GM12878 (cell line): ENCODE measurements at regions of chr15 and their contacts with region 1.

Region 1: DNA sequence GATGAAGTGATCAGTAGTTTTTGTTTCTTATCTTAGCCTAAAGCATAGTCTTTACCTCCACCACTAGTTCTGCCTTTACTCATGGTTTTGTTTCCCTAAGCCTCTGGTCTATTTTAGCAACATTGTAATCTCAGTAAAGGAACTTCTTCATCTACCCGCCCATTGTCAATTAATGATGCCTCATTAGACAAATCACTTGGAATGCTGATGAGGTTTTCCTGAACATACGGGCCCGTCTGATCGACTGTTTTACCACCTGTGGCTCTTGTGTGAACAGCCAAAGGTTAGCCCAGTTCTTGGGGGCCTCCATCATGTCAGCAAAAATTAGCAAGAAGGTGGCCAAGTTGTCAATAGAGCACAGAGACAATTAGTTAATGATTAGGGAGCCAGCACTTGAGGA is 470.1 kb upstream of the ARRDC4 start:
- DNase-seq: no peak
- ATAC-seq: no peak
- H3K4me3 ChIP-seq: no peak overlapping the region
- H3K27ac ChIP-seq: no peak overlapping the region
- H3K4me1 ChIP-seq: no peaks in the 10 kb centered on the region
- H3K27me3 ChIP-seq: no peaks in the 10 kb centered on the region
- CTCF ChIP-seq: no peak
- EP300 ChIP-seq: no peak
- POLR2A ChIP-seq: no peak
- RAD21 ChIP-seq: no peak

Region 2: DNA sequence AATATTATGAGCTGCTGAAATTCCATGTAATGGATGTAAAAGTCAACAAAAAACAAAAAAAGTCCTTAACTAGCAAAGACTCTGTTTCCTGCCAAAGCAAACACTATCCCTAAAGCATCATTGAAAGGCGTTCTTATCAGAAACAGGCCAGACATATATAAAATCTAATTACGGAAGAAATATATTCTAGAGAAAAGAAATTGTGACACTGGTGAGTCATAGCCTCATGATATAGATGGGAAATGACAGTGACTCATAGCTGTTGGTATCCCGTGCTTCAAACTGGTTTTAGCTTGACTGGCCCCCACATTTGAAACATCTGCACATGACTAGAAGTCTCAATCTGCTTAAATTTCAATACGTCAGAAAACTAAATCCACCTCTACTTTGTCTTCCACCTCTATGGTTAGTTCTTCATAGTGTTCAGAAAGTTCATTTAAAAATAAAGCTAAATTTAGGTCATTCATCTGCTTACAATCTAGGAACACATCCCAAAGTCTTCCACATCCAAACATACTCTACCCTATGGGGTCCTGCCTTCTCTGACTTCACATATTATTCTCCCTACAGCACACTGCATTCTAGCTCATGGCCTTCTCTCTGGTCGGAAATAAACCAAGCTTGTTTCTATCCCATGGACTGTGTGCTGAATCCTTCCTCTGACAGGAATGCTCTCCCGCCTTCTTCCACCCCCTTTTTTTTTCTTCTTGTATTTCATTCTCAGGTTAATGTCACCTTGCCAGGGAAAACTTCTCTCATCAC is 13.8 kb after region 1 on chr15:
- CTCF ChIA-PET with region 1: no interaction called
- POLR2A ChIA-PET with region 1: no interaction called
- RAD21 ChIA-PET with region 1: interaction called, 11 read pairs
- SMC1A ChIA-PET with region 1: no interaction called
- in situ Hi-C with region 1: no loop called
- intact Hi-C with region 1: no loop called
- DNase-seq: no peak
- ATAC-seq: no peak
- H3K4me3 ChIP-seq: no peak overlapping the region
- H3K27ac ChIP-seq: no peak overlapping the region
- H3K4me1 ChIP-seq: no peaks in the 10 kb centered on the region
- H3K27me3 ChIP-seq: no peaks in the 10 kb centered on the region
- CTCF ChIP-seq: no peak
- EP300 ChIP-seq: no peak
- POLR2A ChIP-seq: no peak
- RAD21 ChIP-seq: no peak